ENCODE measurements at regions of chr4 and their contacts with region 1.

Region 1: DNA sequence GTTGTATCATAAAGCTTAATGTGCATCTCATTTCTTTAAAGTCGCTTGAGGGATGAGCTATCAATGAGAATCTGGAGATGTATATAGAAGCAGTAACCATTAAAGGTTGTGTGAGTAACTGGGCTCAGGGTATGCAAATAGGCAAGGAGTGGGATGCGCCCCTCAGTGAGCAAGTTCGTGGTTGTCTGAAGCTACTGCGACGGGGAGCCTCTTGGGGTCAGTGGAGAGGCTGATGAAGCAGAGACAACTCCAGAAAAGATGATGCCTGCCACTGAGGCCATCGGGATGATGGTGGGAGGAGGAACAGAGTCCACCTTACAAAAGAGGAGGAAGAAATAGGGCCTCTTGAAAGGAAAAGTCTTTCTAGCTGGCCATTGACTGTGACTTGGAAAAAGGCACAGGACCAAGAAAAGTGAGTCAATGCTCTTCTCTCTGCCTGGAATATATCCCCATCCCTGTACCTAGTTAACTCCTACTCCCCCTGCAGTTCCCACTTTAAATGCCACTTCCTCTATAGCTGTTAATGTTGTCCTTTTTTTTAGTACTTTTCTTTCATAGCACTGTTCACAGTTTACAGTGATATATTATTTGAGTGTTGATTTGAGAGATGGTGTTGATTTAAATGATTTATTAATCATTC is 51.4 kb upstream of the LSM6 start:
- DNase-seq: no peak
- ATAC-seq: peak; percentile 93
- H3K4me3 ChIP-seq: no peak overlapping the region
- H3K27ac ChIP-seq: no peak overlapping the region
- H3K4me1 ChIP-seq: peaks cover 8% of the 10 kb centered on the region
- H3K27me3 ChIP-seq: no peaks in the 10 kb centered on the region
- CTCF ChIP-seq: peak in 2 of 3 experiments; percentile 3 to 32; a peak in 2 of 6 replicates
- EP300 ChIP-seq: no peak
- POLR2A ChIP-seq: no peak
- RAD21 ChIP-seq: peak; percentile 21; the same call in 1 of the 2 replicates

Region 2: GRCh38 chr4:146023334-146023967 is 100.7 kb before region 1 on chr4:
- CTCF ChIA-PET with region 1: no interaction called
- POLR2A ChIA-PET with region 1: no interaction called
- RAD21 ChIA-PET with region 1: no interaction called
- SMC1A ChIA-PET with region 1: no interaction called
- in situ Hi-C with region 1: no loop called
- intact Hi-C with region 1: no loop called
- DNase-seq: peak; percentile 50
- ATAC-seq: peak; percentile 97
- H3K4me3 ChIP-seq: 0 out of 2 replicates have a peak overlapping the region, but pooled peaks have one; percentile 25
- H3K27ac ChIP-seq: peak overlapping the region; percentile 59
- H3K4me1 ChIP-seq: peaks cover 17% of the 10 kb centered on the region
- H3K27me3 ChIP-seq: no peaks in the 10 kb centered on the region
- CTCF ChIP-seq: no peak
- EP300 ChIP-seq: no peak
- POLR2A ChIP-seq: peak; percentile 24; the same call in 1 of the 2 replicates
- RAD21 ChIP-seq: no peak

Region 3: GRCh38 chr4:146110871-146111485 is 13.2 kb before region 1 on chr4:
- CTCF ChIA-PET with region 1: interaction called, 4 read pairs
- POLR2A ChIA-PET with region 1: interaction called, 3 read pairs
- RAD21 ChIA-PET with region 1: interaction called, 4 read pairs
- SMC1A ChIA-PET with region 1: interaction called, 13 read pairs
- in situ Hi-C with region 1: no loop called
- intact Hi-C with region 1: no loop called
- DNase-seq: no peak
- ATAC-seq: peak; percentile 74
- H3K4me3 ChIP-seq: no peak overlapping the region
- H3K27ac ChIP-seq: peak overlapping the region; percentile 61
- H3K4me1 ChIP-seq: peaks cover 28% of the 10 kb centered on the region
- H3K27me3 ChIP-seq: no peaks in the 10 kb centered on the region
- CTCF ChIP-seq: no peak
- EP300 ChIP-seq: no peak
- POLR2A ChIP-seq: no peak
- RAD21 ChIP-seq: no peak